ENCODE measurements at regions of chr1 and their contacts with region 1.

Region 1: DNA sequence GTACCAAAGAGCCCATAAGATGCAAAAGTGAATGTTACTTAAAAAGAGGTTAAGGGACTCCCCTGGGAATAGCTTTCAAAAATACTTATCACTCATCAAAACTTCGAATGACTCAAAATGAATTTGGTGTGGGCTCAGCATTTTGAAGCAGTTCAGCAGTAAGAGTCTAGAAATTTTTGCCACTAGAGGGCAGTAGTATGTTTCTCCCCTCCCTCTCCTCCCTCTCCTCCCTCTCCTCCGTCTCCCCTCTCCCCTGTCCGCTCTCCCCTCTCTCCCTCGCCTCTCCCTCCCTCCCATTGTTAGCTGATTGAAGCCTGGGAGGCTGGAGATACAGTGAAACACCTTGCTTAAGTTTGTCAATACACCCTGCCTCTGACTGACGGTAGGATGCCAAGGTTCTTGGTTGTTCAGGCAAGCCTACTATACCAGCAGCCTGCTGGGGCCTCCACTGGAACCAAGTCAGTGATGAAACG is 70.8 kb upstream of the TENT5C start:
- DNase-seq: peak; percentile 27
- H3K4me3 ChIP-seq: no peak overlapping the region
- H3K27ac ChIP-seq: no peak overlapping the region
- H3K4me1 ChIP-seq: peaks cover 0 to 12% (median 0%) of the 10 kb centered on the region in 4 donors
- H3K27me3 ChIP-seq: no peaks in the 10 kb centered on the region
- CTCF ChIP-seq: peak; percentile 61 to 74 (median 70)
- EP300 ChIP-seq: no peak
- POLR2A ChIP-seq: no peak

Region 2: DNA sequence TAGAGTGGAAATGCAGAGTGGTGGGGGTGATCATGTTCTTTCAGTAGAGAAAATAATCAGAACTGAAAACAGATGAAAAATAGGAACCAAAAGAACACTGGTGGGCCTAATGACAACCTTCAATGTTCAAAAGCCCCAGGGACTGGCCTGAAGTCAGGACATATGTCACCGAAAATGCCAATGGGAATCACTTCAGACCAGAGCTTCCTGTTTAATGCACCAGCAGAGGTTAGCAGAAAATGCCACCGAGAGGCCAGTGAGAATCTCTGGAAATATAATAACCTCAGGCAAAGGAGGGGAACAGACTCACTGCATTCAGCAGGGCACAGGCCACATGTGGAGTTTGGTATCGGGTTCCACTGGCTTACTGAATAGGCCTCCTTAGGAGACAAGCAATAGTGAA is 948.3 kb before region 1 on chr1:
- in situ Hi-C with region 1: no loop called
- intact Hi-C with region 1: no loop called
- DNase-seq: no peak
- H3K4me3 ChIP-seq: no peak overlapping the region
- H3K27ac ChIP-seq: no peak overlapping the region
- H3K4me1 ChIP-seq: peaks cover 0 to 14% (median 11%) of the 10 kb centered on the region in 4 donors
- H3K27me3 ChIP-seq: no peaks in the 10 kb centered on the region
- CTCF ChIP-seq: no peak
- EP300 ChIP-seq: no peak
- POLR2A ChIP-seq: no peak

Region 3: DNA sequence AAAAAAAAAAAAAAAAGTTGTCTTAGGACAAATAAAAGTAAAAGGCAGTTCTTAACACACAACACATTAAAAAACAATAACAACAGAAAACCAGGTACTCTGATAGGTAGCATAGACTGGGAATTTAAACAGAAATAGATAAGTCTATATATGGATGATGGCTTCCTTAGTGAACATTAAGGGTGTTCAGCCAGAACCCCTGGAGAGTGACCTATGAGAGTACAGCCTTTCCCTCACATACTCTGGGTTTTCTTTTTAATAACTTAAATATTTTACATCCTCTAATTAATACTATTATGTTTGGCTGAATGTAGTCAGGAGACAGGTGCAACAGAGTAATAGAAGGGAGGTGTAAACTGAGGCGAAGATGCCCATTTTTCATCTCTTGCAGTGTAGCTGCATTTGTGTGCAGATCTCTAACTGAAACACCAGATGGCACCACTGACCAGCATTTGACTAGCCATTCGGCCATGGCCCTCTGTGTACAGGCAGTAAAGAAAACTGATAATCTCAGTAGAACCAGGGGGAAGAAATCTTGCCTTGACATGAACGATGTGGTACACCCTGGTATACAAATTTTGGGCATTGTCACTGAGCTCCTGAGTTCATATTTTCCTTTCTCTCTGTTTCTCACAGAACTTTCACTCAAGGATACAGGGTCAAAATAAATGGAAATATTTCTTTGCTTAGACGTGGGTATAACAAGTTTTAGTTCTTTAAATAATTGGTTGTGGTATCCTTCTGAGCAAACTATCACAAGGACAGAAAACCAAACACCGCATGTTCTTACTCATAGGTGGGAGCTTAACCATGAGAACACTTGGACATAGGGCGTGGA is 467.3 kb before region 1 on chr1:
- in situ Hi-C with region 1: no loop called
- intact Hi-C with region 1: no loop called
- DNase-seq: peak; percentile 51
- H3K4me3 ChIP-seq: no peak overlapping the region
- H3K27ac ChIP-seq: no peak overlapping the region
- H3K4me1 ChIP-seq: peaks cover 0 to 4% (median 0%) of the 10 kb centered on the region in 4 donors
- H3K27me3 ChIP-seq: no peaks in the 10 kb centered on the region
- CTCF ChIP-seq: peak; percentile 71 to 82 (median 75)
- EP300 ChIP-seq: no peak
- POLR2A ChIP-seq: no peak

Region 4: GRCh38 chr1:117250061-117250606 is 284.9 kb before region 1 on chr1:
- in situ Hi-C with region 1: no loop called
- intact Hi-C with region 1: no loop called
- DNase-seq: no peak
- H3K4me3 ChIP-seq: no peak overlapping the region
- H3K27ac ChIP-seq: no peak overlapping the region
- H3K4me1 ChIP-seq: no peaks in the 10 kb centered on the region
- H3K27me3 ChIP-seq: no peaks in the 10 kb centered on the region
- CTCF ChIP-seq: no peak
- EP300 ChIP-seq: no peak
- POLR2A ChIP-seq: no peak

Region 5: GRCh38 chr1:117674521-117675397 is 139.7 kb after region 1 on chr1:
- in situ Hi-C with region 1: loop called in 1 of 4 experiments (anchors 10 kb)
- intact Hi-C with region 1: no loop called
- DNase-seq: peak; percentile 62
- H3K4me3 ChIP-seq: no peak overlapping the region
- H3K27ac ChIP-seq: peak overlapping the region; percentile 10 to 59 (median 34)
- H3K4me1 ChIP-seq: peaks cover 5 to 43% (median 39%) of the 10 kb centered on the region in 4 donors
- H3K27me3 ChIP-seq: no peaks in the 10 kb centered on the region
- CTCF ChIP-seq: peak in 3 of 5 experiments; percentile 10 to 23 (median 15)
- EP300 ChIP-seq: no peak
- POLR2A ChIP-seq: no peak

Region 6: DNA sequence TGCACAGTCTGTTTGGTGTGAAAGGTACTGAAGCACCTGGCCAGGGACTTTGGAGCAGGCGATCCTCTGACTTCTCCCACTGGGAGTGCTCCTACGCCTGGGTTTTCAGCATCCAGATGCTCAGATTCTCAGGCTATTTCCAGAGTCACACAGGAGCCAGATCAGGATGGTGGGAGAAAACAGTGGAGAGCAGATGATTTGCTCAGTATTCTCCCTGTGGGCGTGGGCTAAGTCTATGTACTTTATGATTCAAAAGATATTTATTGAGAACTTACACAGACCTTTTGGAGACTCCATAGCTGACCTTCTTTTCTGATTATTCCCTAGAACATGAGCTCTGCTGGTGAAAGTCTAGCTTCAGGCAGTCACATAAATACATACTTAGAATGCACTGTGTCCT is 205.5 kb after region 1 on chr1:
- in situ Hi-C with region 1: loop called in 1 of 4 experiments (anchors 10 kb)
- intact Hi-C with region 1: no loop called
- DNase-seq: no peak
- H3K4me3 ChIP-seq: no peak overlapping the region
- H3K27ac ChIP-seq: no peak overlapping the region
- H3K4me1 ChIP-seq: peaks cover 0 to 8% (median 3%) of the 10 kb centered on the region in 4 donors
- H3K27me3 ChIP-seq: no peaks in the 10 kb centered on the region
- CTCF ChIP-seq: no peak
- EP300 ChIP-seq: no peak
- POLR2A ChIP-seq: no peak

Measured in transverse colon (tissue), 4 donors.